Dorsolateral prefrontal cortex (tissue), 120 donors: ENCODE measurements at regions of chr1 and their contacts with region 1.

Region 1: GRCh38 chr1:151352006-151352689 is 5.1 kb upstream of the RFX5 start:
- DNase-seq: no peak
- H3K4me3 ChIP-seq: no peak overlapping the region
- H3K27ac ChIP-seq: no peak overlapping the region
- H3K27me3 ChIP-seq: no peaks in the 10 kb centered on the region
- CTCF ChIP-seq: no peak

Region 2: GRCh38 chr1:151106894-151107293 is 245.3 kb before region 1 on chr1:
- intact Hi-C with region 1: no loop called
- DNase-seq: no peak
- H3K4me3 ChIP-seq: no peak overlapping the region
- H3K27ac ChIP-seq: no peak overlapping the region
- H3K27me3 ChIP-seq: no peaks in the 10 kb centered on the region
- CTCF ChIP-seq: no peak

Region 3: DNA sequence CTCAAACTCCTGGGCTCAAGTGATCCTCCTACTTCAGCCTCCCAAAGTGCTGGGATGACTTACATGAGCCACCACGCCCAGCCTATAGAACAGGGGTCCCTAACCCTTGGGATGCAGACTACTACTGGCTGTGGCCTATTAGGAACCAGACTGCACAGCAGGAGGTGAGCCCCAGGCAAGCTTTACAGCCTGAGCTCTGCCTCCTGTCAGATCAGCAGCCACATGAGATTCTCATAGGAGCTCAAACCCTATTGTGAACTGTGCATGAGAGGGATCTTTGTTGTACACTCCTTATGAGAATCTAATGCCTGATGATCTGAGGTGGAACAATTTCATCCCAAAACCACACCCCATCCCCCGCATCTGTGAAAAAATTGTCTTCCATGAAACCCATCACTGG is 33.9 kb after region 1 on chr1:
- intact Hi-C with region 1: loop called in 1 of 2 experiments (anchors 5 kb)
- DNase-seq: no peak
- H3K4me3 ChIP-seq: no peak overlapping the region
- H3K27ac ChIP-seq: no peak overlapping the region
- H3K27me3 ChIP-seq: no peaks in the 10 kb centered on the region
- CTCF ChIP-seq: no peak

Region 4: DNA sequence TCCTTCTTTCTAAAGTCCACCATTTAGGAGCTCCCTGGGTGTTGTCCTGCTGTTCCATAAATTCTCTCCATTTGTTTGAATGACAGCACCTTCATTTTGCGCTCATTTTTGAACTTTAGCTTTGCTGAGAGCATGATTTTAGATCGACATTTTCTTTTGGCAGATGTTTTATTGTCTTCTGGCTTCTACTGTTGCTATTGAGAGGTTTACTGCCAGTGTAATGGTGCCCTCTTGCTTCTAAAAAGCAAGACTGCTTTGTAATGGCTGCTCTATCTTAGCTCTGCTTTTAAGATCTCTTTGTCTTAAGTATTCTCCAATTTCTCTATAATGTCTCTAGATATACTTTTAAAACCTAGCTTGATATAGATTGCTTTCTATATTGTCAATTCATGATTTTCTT is 529.3 kb after region 1 on chr1:
- intact Hi-C with region 1: no loop called
- DNase-seq: no peak
- H3K4me3 ChIP-seq: no peak overlapping the region
- H3K27ac ChIP-seq: peak overlapping the region in 16 of 59 donors; percentile 2 to 63 (median 46)
- H3K27me3 ChIP-seq: no peaks in the 10 kb centered on the region
- CTCF ChIP-seq: peak in 55 of 56 donors; percentile 24 to 84 (median 63)